Mammary epithelial cell (primary cell): ENCODE measurements at regions of chr20 and their contacts with region 1.

Region 1: GRCh38 chr20:739736-740135 is 28.6 kb downstream of the SLC52A3 start:
- DNase-seq: no peak
- H3K4me3 ChIP-seq: no peak overlapping the region
- H3K27ac ChIP-seq: no peak overlapping the region
- H3K4me1 ChIP-seq: no peaks in the 10 kb centered on the region
- H3K27me3 ChIP-seq: no peaks in the 10 kb centered on the region
- CTCF ChIP-seq: no peak

Region 2: GRCh38 chr20:431012-431904 is 308.5 kb before region 1 on chr20:
- CTCF ChIA-PET with region 1: interaction called, 3 read pairs
- dilution Hi-C with region 1: no loop called
- in situ Hi-C with region 1: no loop called
- intact Hi-C with region 1: loop called (anchors 5 kb)
- DNase-seq: peak; percentile 30
- H3K4me3 ChIP-seq: no peak overlapping the region
- H3K27ac ChIP-seq: no peak overlapping the region
- H3K4me1 ChIP-seq: peaks cover 3% of the 10 kb centered on the region
- H3K27me3 ChIP-seq: no peaks in the 10 kb centered on the region
- CTCF ChIP-seq: peak; percentile 43 to 68

Region 3: DNA sequence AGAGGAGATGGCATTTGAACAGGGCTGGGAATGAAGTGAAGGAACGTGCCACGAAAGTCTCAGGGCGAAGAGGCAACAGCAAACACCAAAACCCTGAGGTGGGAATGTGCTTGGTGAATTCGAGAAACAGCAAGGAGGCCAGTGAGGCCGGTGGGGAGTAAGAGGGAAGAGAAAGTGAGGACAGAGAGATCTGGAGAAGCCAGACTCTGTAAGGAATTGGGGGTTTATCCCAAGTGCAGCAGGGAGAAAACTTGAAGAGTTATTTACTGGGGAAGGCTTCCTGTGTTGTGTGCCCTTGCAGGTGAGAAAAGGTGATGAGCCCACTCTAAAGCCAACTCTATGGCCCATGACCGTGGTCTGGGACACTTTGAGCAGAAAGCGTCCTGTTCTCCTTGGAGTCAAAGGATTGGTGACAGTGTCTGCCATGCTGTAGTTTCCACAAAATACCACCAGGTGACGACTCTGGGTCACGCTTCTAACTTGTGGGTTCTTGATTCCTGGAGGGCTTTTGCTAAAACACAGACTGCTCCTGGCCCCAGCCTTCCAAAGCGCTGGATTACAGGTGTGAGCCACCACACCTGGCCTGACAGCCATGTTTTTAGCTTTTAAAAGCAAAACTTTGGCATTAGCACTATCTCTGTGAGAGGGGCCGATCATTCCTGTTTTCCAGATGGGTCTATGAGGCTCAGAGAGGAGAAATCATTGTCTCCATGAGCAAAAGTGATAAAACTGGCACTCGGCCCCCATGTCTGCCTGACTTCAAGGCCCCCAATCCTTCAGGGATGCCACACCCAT is 178.1 kb before region 1 on chr20:
- CTCF ChIA-PET with region 1: no interaction called
- dilution Hi-C with region 1: no loop called
- in situ Hi-C with region 1: loop called (anchors 5 kb)
- intact Hi-C with region 1: loop called (anchors 1 kb)
- DNase-seq: peak; percentile 50
- H3K4me3 ChIP-seq: no peak overlapping the region
- H3K27ac ChIP-seq: no peak overlapping the region
- H3K4me1 ChIP-seq: no peaks in the 10 kb centered on the region
- H3K27me3 ChIP-seq: no peaks in the 10 kb centered on the region
- CTCF ChIP-seq: peak; percentile 97 to 100

Region 4: GRCh38 chr20:653110-653589 is 86.6 kb before region 1 on chr20 and contains the start of gene SRXN1:
- CTCF ChIA-PET with region 1: no interaction called
- dilution Hi-C with region 1: no loop called
- in situ Hi-C with region 1: loop called in 1 of 2 experiments (anchors 5 kb)
- intact Hi-C with region 1: loop called (anchors 1 kb)
- DNase-seq: peak; percentile 93
- H3K4me3 ChIP-seq: peak within 1 kb of the TSS; percentile 77 to 81 (median 78)
- H3K27ac ChIP-seq: peak within 1 kb of the TSS; percentile 64
- H3K4me1 ChIP-seq: peaks cover 12% of the 10 kb centered on the region
- H3K27me3 ChIP-seq: no peaks in the 10 kb centered on the region
- CTCF ChIP-seq: peak; percentile 42 to 78
- total RNA-seq, gene SRXN1: 49.9 to 68.0 TPM

Region 5: DNA sequence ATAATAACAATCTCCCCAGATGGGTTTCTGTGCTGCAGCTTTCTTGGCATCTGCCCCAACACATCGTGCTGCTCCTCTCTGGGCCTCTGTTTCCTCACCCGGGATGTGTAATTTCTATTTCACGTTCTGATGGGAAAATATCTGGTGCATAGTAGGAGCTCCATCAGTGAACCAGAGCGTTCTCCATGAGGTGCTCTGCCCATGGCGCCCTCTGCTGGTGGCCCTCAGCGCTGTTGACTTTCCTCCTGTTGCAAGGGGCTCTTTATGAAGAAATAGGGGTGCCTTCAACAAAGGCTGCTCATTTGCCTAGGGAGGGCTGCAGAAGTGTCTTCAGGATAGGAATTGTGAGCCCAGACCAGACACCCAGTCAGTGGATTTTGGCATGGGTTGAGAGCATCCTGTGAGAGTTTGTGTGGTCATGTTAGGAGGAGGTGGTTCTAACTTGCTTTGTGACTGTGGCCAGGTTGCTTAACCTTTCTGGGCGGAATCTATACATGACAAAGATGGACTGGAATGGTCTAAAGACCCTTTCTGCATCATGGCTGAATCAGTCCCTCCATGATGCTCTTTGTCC is 72.3 kb before region 1 on chr20:
- CTCF ChIA-PET with region 1: no interaction called
- dilution Hi-C with region 1: no loop called
- in situ Hi-C with region 1: no loop called
- intact Hi-C with region 1: loop called (anchors 5 kb)
- DNase-seq: no peak
- H3K4me3 ChIP-seq: no peak overlapping the region
- H3K27ac ChIP-seq: no peak overlapping the region
- H3K4me1 ChIP-seq: peaks cover 6% of the 10 kb centered on the region
- H3K27me3 ChIP-seq: peaks cover 12% of the 10 kb centered on the region
- CTCF ChIP-seq: peak; percentile 90 to 93